Esophagus squamous epithelium (tissue), 5 donors: ENCODE measurements at regions of chr3 and their contacts with region 1.

Region 1: GRCh38 chr3:61858056-61858455 is 296.7 kb downstream of the PTPRG start:
- DNase-seq: no peak
- H3K4me3 ChIP-seq: no peak overlapping the region
- H3K27ac ChIP-seq: no peak overlapping the region
- H3K4me1 ChIP-seq: peaks cover 0 to 6% (median 0%) of the 10 kb centered on the region in 3 donors
- H3K27me3 ChIP-seq: no peaks in the 10 kb centered on the region
- CTCF ChIP-seq: peak in 4 of 6 experiments; percentile 24 to 54 (median 44)
- POLR2A ChIP-seq: no peak

Region 2: GRCh38 chr3:61561374-61562041 is 296.5 kb before region 1 on chr3 and contains the start of gene PTPRG:
- intact Hi-C with region 1: loop called (anchors 10 kb)
- DNase-seq: peak; percentile 4
- H3K4me3 ChIP-seq: peak within 1 kb of the TSS; percentile 68 to 81 (median 74)
- H3K27ac ChIP-seq: peak within 1 kb of the TSS; percentile 82 to 95 (median 94)
- H3K4me1 ChIP-seq: peaks cover 4 to 58% (median 12%) of the 10 kb centered on the region in 3 donors
- H3K27me3 ChIP-seq: peaks cover 0 to 79% (median 0%) of the 10 kb centered on the region in 4 donors
- CTCF ChIP-seq: no peak
- POLR2A ChIP-seq: peak in 2 of 4 donors; percentile 62 to 73
- total RNA-seq, gene PTPRG: 3.7 to 42.2 (median 15.2) TPM

Region 3: DNA sequence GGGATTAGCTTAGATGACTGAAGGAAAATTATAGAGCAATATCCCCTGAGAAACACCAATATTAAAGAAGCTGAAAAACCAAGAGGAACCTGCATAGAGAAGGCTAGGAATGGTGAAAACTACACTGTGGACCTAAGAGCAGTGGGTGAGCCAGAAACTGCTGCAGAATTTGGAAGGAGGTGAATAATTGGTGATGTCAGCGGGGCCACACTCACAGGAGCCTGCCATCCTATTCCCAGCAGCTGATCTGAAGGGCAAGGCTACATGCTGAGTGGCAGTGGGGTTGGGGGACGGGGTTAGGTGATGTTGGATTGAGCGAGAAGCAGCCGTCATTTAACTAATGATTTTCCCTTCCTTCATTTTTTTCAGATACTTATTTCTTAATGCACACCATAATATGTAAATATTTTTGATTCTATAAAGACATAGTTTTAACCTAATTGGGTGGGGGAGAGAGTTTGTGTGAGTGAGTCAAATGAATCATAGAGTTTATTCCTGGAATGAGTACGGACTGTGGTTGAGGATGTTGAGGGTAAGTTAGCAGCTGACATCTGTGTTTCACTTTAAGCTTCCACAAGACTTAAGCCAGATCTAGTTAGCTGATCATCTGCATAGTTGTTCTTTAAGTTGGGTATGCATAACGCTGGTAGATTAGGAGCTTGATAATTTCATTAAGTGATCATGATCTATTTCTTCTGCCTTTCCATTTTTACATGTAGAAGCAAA is 73.9 kb before region 1 on chr3:
- intact Hi-C with region 1: no loop called
- DNase-seq: no peak
- H3K4me3 ChIP-seq: no peak overlapping the region
- H3K27ac ChIP-seq: no peak overlapping the region
- H3K4me1 ChIP-seq: no peaks in the 10 kb centered on the region
- H3K27me3 ChIP-seq: no peaks in the 10 kb centered on the region
- CTCF ChIP-seq: no peak
- POLR2A ChIP-seq: no peak

Region 4: GRCh38 chr3:62073038-62073437 is 215.0 kb after region 1 on chr3:
- intact Hi-C with region 1: no loop called
- DNase-seq: no peak
- H3K4me3 ChIP-seq: no peak overlapping the region
- H3K27ac ChIP-seq: no peak overlapping the region
- H3K4me1 ChIP-seq: no peaks in the 10 kb centered on the region
- H3K27me3 ChIP-seq: no peaks in the 10 kb centered on the region
- CTCF ChIP-seq: no peak
- POLR2A ChIP-seq: no peak

Region 5: DNA sequence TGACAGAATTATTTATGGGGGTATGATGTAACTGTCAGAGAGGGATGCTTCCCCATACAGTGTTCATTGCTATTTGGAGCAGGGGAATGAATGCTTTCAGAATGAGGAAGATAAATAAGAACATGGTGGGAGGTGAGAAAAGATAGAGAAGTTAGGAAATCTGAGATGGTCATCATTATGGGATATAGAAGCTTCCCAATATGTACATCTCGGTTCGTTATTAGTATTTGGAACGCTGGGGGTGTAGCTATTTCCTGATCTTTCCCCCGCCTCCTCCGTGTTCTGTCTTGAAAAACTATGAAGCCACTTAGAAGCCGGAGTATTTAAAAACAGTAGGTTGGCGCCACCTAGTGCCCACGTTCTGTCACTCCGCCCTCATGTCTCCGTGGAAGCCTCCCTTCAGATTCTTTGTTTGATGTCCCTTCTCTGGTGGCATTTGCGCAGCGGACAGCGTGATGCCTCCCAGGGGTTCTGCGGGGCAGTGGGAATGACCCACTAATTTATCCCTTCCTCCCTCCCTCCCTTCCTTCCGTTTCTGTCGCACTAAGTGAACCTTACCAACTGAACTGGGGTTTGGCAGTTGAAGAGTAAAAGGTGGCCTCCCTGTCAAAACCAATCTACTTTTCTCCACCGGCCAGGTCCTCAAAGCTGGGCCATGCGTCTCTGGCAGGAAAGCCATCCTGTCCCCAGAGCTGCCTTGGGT is 330.8 kb after region 1 on chr3:
- intact Hi-C with region 1: loop called (anchors 10 kb)
- DNase-seq: no peak
- H3K4me3 ChIP-seq: peak overlapping the region in 1 of 4 donors; percentile 39
- H3K27ac ChIP-seq: no peak overlapping the region
- H3K4me1 ChIP-seq: peaks cover 0 to 16% (median 2%) of the 10 kb centered on the region in 3 donors
- H3K27me3 ChIP-seq: no peaks in the 10 kb centered on the region
- CTCF ChIP-seq: peak; percentile 47 to 80 (median 76)
- POLR2A ChIP-seq: no peak